Caco-2 (cell line): ENCODE measurements at regions of chr14 and their contacts with region 1.

Region 1: GRCh38 chr14:59262717-59263454 is 74.4 kb downstream of the DAAM1 start:
- DNase-seq: peak; percentile 43 to 49
- H3K4me3 ChIP-seq: no peak overlapping the region
- H3K4me3 Mint-ChIP-seq: no peak overlapping the region
- H3K27ac Mint-ChIP-seq: no peak overlapping the region
- H3K4me1 ChIP-seq: no peaks in the 10 kb centered on the region
- H3K4me1 Mint-ChIP-seq: peaks cover 8% of the 10 kb centered on the region
- H3K27me3 ChIP-seq: no peaks in the 10 kb centered on the region
- H3K27me3 Mint-ChIP-seq: no peaks in the 10 kb centered on the region
- CTCF ChIP-seq: peak; percentile 34 to 55

Region 2: GRCh38 chr14:59208224-59208814 is 54.6 kb before region 1 on chr14:
- CTCF ChIA-PET with region 1: no interaction called
- POLR2A ChIA-PET with region 1: no interaction called
- intact Hi-C with region 1: no loop called
- DNase-seq: no peak
- H3K4me3 ChIP-seq: no peak overlapping the region
- H3K4me3 Mint-ChIP-seq: no peak overlapping the region
- H3K27ac Mint-ChIP-seq: no peak overlapping the region
- H3K4me1 ChIP-seq: peaks cover 5% of the 10 kb centered on the region; the same call in 1 of the 2 replicates
- H3K4me1 Mint-ChIP-seq: no peaks in the 10 kb centered on the region
- H3K27me3 ChIP-seq: no peaks in the 10 kb centered on the region
- H3K27me3 Mint-ChIP-seq: no peaks in the 10 kb centered on the region
- CTCF ChIP-seq: no peak

Region 3: GRCh38 chr14:59294662-59294992 is 31.7 kb after region 1 on chr14:
- CTCF ChIA-PET with region 1: no interaction called
- POLR2A ChIA-PET with region 1: no interaction called
- intact Hi-C with region 1: no loop called
- DNase-seq: no peak
- H3K4me3 ChIP-seq: no peak overlapping the region
- H3K4me3 Mint-ChIP-seq: no peak overlapping the region
- H3K27ac Mint-ChIP-seq: peak overlapping the region; percentile 42
- H3K4me1 ChIP-seq: peaks cover 37% of the 10 kb centered on the region
- H3K4me1 Mint-ChIP-seq: peaks cover 37% of the 10 kb centered on the region
- H3K27me3 ChIP-seq: no peaks in the 10 kb centered on the region
- H3K27me3 Mint-ChIP-seq: no peaks in the 10 kb centered on the region
- CTCF ChIP-seq: no peak

Region 4: DNA sequence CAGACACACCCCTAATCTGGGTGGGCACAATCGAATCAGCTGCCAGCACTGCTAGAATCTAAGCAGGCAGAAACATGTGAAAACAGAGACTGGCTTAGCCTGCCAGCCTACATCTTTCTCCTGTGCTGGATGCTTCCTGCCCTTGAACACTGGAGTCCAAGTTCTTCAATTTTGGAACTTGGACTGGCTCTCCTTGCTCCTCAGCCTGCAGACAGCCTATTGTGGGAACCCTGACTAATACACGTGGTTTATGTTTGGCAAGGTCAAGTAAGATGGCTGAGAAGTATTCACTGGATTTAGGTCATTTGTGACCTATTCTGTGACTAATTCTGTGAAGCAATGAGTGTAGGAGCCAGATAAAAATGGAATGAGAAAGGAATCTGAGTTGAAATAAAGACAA is 191.2 kb after region 1 on chr14:
- CTCF ChIA-PET with region 1: no interaction called
- POLR2A ChIA-PET with region 1: no interaction called
- intact Hi-C with region 1: loop called (anchors 10 kb)
- DNase-seq: no peak
- H3K4me3 ChIP-seq: no peak overlapping the region
- H3K4me3 Mint-ChIP-seq: no peak overlapping the region
- H3K27ac Mint-ChIP-seq: no peak overlapping the region
- H3K4me1 ChIP-seq: no peaks in the 10 kb centered on the region; the same call in 1 of the 2 replicates
- H3K4me1 Mint-ChIP-seq: no peaks in the 10 kb centered on the region
- H3K27me3 ChIP-seq: no peaks in the 10 kb centered on the region
- H3K27me3 Mint-ChIP-seq: no peaks in the 10 kb centered on the region
- CTCF ChIP-seq: no peak